HCT116 (cell line): ENCODE measurements at regions of chr20 and their contacts with region 1.

Region 1: GRCh38 chr20:20993372-20993771 is 112.8 kb downstream of the LINC00237 start:
- DNase-seq: no peak
- ATAC-seq: no peak
- H3K4me3 ChIP-seq: no peak overlapping the region
- H3K27ac ChIP-seq: no peak overlapping the region
- H3K4me1 ChIP-seq: no peaks in the 10 kb centered on the region
- H3K27me3 ChIP-seq: peaks cover 62% of the 10 kb centered on the region
- CTCF ChIP-seq: no peak
- POLR2A ChIP-seq: no peak
- RAD21 ChIP-seq: no peak

Region 2: DNA sequence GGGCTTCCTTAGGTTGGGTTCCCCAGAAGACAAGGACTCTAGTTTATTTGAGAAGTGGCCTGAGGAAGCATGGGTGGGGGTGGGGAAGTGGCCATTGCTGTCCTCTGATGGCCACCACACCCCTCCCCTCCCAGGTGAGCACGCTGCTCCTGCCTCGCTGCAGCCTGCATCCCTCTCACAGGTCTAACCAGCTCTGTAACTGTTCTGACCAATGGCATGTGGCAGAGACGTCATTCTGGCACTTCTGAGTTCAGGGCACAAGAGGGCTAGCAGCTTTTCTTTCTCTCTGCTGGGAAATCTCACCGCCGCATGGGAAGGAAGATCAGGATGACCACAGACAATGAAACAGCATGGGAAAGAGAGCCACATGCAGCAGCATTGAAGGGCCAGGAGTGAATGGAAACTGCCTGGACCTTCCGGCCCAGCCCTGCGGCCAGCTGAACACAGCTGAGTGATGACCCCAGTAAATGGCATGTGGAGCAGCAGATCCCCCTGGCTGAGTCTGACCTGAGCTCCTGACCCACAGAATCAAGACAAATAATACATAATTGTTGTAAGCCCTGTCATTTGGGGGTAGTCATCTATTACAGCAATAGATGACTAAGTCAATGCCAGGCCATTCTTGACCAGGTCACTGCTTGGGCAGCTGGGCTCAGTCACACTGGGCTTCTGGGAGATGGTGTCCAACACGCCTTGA is 67.0 kb before region 1 on chr20:
- CTCF ChIA-PET with region 1: no interaction called
- POLR2A ChIA-PET with region 1: no interaction called
- RAD21 ChIA-PET with region 1: interaction called in 1 of 2 experiments, 10 read pairs
- intact Hi-C with region 1: no loop called
- DNase-seq: no peak
- ATAC-seq: no peak
- H3K4me3 ChIP-seq: no peak overlapping the region
- H3K27ac ChIP-seq: no peak overlapping the region
- H3K4me1 ChIP-seq: no peaks in the 10 kb centered on the region
- H3K27me3 ChIP-seq: peaks cover 34% of the 10 kb centered on the region
- CTCF ChIP-seq: no peak
- POLR2A ChIP-seq: no peak
- RAD21 ChIP-seq: no peak